Endothelial cell of umbilical vein (primary cell): ENCODE measurements at regions of chr1 and their contacts with region 1.

Region 1: DNA sequence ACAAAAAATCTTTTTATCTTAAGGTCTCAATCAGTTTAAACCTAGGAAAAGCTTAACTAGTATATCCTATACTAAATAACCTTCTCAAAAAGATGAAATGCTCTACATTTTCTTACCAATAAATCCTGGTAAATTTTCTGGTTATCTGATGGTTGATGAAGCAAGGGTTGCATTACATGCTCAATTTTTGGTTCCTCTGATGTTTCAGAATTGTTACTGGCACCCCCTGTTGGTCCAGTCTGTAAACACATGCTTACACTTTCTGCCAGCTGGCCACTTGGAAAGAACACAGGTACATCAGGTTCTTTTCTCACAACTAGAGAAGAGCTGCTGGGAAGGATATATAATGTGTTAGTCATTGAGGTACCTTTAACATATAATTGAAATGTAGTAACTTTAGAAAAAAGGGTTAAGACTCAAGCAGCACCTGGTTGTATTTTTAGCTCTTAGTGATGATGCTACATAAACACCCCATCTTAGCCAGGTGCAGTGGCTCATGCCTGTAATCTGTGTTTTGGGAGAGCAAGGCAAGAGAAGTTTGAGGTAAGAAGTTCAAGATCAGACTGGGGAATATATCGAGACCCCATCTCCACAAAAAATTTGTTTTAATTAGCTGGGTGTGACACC is 30.9 kb upstream of the TAL1 start:
- DNase-seq: peak; percentile 77
- H3K4me3 ChIP-seq: no peak overlapping the region
- H3K27ac ChIP-seq: no peak overlapping the region
- H3K4me1 ChIP-seq: no peaks in the 10 kb centered on the region
- H3K27me3 ChIP-seq: no peaks in the 10 kb centered on the region
- CTCF ChIP-seq: peak; percentile 60 to 62
- POLR2A ChIP-seq: no peak

Region 2: DNA sequence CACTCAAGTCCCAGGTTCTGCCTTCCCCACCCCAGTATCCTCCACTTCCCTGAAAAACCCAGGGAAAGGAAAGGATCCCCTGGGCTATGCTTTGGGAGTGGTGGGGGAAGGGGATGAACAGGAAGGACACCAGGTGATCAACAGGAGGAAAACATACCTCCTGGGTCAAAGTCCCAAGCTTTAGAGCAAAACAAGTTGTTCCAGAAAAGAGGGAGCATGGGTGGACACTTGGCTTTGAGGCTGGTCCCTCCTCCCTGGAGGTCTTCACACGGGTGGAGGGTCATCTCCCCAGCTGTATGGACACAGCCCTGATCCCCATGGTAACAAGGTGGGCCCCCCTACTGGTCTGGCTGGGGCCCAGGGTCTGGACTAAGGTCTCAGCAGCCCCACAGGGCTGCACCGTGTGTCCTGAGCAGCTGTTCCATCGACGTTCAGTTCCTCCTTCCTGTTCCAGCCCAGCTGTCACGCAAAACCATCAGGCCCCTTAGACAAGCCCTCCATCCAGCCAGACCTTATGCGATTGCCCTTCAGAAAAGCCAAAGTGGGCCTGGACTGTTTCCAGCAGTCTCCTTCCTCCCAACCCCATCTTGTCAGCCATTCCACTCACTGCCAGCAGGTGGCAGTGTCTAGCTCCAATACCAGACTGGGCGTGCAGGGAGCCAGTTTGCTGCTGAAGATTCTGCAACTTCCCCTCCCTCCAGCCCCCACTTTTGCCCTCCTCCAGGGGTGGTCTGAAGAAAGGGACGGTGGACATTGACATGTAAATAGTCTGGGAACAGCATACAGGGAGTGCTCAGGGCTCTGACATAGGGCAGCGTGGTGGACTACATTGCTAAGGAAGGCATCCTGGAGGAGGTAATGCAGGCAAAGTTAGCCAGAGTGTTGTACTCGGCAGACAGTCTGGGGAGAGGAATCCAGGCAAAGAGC is 70.2 kb before region 1 on chr1:
- CTCF ChIA-PET with region 1: interaction called, 224 read pairs
- POLR2A ChIA-PET with region 1: no interaction called
- dilution Hi-C with region 1: no loop called
- intact Hi-C with region 1: loop called (anchors 1 kb)
- DNase-seq: peak; percentile 76
- H3K4me3 ChIP-seq: no peak overlapping the region
- H3K27ac ChIP-seq: no peak overlapping the region
- H3K4me1 ChIP-seq: peaks cover 5% of the 10 kb centered on the region
- H3K27me3 ChIP-seq: no peaks in the 10 kb centered on the region
- CTCF ChIP-seq: peak; percentile 94 to 97
- POLR2A ChIP-seq: no peak

Region 3: DNA sequence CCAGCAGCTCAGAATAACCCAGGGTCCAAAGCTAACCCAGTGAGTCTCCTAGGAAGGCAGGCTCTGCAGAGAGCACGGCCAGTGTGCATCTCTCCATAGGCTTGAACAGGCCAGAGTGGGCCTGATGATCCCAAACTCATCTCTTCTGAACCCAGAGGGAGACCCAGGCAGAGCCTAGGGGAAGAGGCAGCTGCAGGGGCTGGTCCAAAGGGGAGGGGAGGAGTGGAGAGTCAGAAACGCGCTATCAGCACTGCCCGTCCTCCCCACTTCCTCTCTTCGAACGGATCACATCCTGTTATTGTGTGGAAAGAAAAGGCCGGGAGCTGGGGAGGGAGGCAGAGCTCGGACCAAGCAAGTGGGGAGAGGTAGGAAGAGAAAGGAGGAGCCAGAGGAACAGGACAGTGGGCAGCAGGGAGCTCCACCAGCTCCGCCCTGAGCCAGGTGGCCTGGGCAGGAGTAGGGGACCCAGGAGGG is 51.1 kb before region 1 on chr1:
- CTCF ChIA-PET with region 1: interaction called, 38 read pairs
- POLR2A ChIA-PET with region 1: no interaction called
- dilution Hi-C with region 1: no loop called
- intact Hi-C with region 1: no loop called
- DNase-seq: peak; percentile 96
- H3K4me3 ChIP-seq: no peak overlapping the region
- H3K27ac ChIP-seq: peak overlapping the region; percentile 92
- H3K4me1 ChIP-seq: peaks cover 58% of the 10 kb centered on the region
- H3K27me3 ChIP-seq: no peaks in the 10 kb centered on the region
- CTCF ChIP-seq: no peak
- POLR2A ChIP-seq: peak; percentile 87

Region 4: GRCh38 chr1:47231301-47232186 is 31.4 kb before region 1 on chr1:
- CTCF ChIA-PET with region 1: interaction called, 76 read pairs
- POLR2A ChIA-PET with region 1: interaction called, 15 read pairs
- dilution Hi-C with region 1: no loop called
- intact Hi-C with region 1: loop called (anchors 1 kb)
- DNase-seq: peak; percentile 75
- H3K4me3 ChIP-seq: peak overlapping the region; percentile 62 to 94 (median 81)
- H3K27ac ChIP-seq: peak overlapping the region; percentile 77
- H3K4me1 ChIP-seq: peaks cover 53% of the 10 kb centered on the region
- H3K27me3 ChIP-seq: no peaks in the 10 kb centered on the region
- CTCF ChIP-seq: no peak
- POLR2A ChIP-seq: peak; percentile 76

Region 5: GRCh38 chr1:47252369-47252768 is 10.5 kb before region 1 on chr1:
- CTCF ChIA-PET with region 1: interaction called, 23 read pairs
- POLR2A ChIA-PET with region 1: no interaction called
- dilution Hi-C with region 1: no loop called
- intact Hi-C with region 1: no loop called
- DNase-seq: peak; percentile 26
- H3K4me3 ChIP-seq: no peak overlapping the region
- H3K27ac ChIP-seq: no peak overlapping the region
- H3K4me1 ChIP-seq: no peaks in the 10 kb centered on the region
- H3K27me3 ChIP-seq: no peaks in the 10 kb centered on the region
- CTCF ChIP-seq: no peak
- POLR2A ChIP-seq: no peak

Region 6: GRCh38 chr1:47333922-47334764 is 71.2 kb after region 1 on chr1:
- CTCF ChIA-PET with region 1: interaction called, 10 read pairs
- POLR2A ChIA-PET with region 1: no interaction called
- dilution Hi-C with region 1: no loop called
- intact Hi-C with region 1: no loop called
- DNase-seq: peak; percentile 78
- H3K4me3 ChIP-seq: peak overlapping the region; percentile 85 to 94 (median 89)
- H3K27ac ChIP-seq: peak overlapping the region; percentile 87
- H3K4me1 ChIP-seq: peaks cover 28% of the 10 kb centered on the region
- H3K27me3 ChIP-seq: no peaks in the 10 kb centered on the region
- CTCF ChIP-seq: peak in 1 of 2 donors; percentile 17
- POLR2A ChIP-seq: peak; percentile 47

Region 7: DNA sequence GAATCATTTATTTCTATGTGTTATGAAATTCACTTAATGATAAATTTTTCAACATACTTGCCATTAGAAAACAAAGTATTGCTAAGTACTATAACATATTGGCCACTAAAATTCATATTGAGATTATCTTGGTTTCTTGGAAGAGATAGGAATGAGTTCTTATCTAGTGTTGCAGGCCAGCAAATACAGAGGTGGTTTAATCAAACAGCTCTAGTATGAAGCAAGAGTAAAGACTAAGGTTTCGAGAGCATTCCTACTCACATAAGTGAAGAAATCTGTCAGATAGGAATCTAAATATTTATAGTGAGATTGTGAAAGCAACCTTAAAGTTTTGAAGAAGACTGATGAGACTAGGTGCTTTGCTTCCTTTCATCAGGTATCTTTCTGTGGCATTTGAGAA is 115.2 kb after region 1 on chr1:
- CTCF ChIA-PET with region 1: no interaction called
- POLR2A ChIA-PET with region 1: no interaction called
- dilution Hi-C with region 1: no loop called
- intact Hi-C with region 1: no loop called
- DNase-seq: no peak
- H3K4me3 ChIP-seq: no peak overlapping the region
- H3K27ac ChIP-seq: no peak overlapping the region
- H3K4me1 ChIP-seq: no peaks in the 10 kb centered on the region
- H3K27me3 ChIP-seq: no peaks in the 10 kb centered on the region
- CTCF ChIP-seq: no peak
- POLR2A ChIP-seq: no peak

Region 8: DNA sequence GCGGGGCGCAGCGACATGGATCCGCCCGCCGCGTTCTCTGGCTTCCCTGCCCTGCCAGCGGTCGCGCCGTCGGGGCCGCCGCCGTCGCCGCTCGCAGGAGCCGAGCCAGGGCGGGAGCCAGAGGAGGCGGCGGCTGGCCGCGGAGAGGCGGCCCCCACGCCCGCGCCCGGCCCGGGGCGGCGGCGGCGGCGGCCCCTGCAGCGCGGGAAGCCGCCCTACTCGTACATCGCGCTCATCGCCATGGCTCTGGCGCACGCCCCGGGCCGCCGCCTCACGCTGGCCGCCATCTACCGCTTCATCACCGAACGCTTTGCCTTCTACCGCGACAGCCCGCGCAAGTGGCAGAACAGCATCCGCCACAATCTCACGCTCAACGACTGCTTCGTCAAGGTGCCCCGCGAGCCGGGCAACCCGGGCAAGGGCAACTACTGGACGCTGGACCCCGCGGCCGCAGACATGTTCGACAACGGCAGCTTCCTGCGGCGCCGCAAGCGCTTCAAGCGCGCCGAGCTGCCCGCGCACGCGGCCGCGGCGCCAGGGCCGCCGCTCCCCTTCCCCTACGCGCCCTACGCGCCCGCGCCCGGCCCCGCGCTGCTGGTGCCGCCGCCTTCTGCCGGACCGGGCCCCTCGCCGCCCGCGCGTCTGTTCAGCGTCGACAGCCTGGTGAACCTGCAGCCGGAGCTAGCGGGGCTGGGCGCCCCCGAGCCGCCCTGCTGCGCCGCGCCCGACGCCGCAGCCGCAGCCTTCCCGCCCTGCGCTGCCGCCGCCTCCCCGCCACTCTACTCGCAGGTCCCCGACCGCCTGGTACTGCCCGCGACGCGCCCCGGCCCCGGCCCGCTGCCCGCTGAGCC is 153.6 kb after region 1 on chr1:
- CTCF ChIA-PET with region 1: no interaction called
- POLR2A ChIA-PET with region 1: no interaction called
- dilution Hi-C with region 1: no loop called
- intact Hi-C with region 1: no loop called
- DNase-seq: peak; percentile 6
- H3K4me3 ChIP-seq: no peak overlapping the region
- H3K27ac ChIP-seq: no peak overlapping the region
- H3K4me1 ChIP-seq: no peaks in the 10 kb centered on the region
- H3K27me3 ChIP-seq: peaks cover 40 to 57% of the 10 kb centered on the region in 2 experiments
- CTCF ChIP-seq: no peak
- POLR2A ChIP-seq: no peak